CD14-positive monocyte (primary cell): ENCODE measurements at regions of chr7 and their contacts with region 1.

Region 1: GRCh38 chr7:41705109-41705901 is 2.4 kb upstream of the INHBA start:
- DNase-seq: peak; percentile 83 to 90 (median 84)
- H3K4me3 ChIP-seq: peak overlapping the region; percentile 45 to 84 (median 58)
- H3K4me3 Mint-ChIP-seq: peak overlapping the region; percentile 87 to 93
- H3K27ac ChIP-seq: peak overlapping the region; percentile 39 to 75
- H3K27ac Mint-ChIP-seq: peak overlapping the region; percentile 76 to 92 (median 88)
- H3K4me1 ChIP-seq: peaks cover 16 to 33% of the 10 kb centered on the region in 2 donors
- H3K4me1 Mint-ChIP-seq: peaks cover 46% of the 10 kb centered on the region
- H3K27me3 ChIP-seq: peaks cover 0 to 3% of the 10 kb centered on the region in 2 donors
- H3K27me3 Mint-ChIP-seq: peaks cover 6 to 23% (median 15%) of the 10 kb centered on the region in 3 donors
- CTCF ChIP-seq: peak; percentile 85

Region 2: DNA sequence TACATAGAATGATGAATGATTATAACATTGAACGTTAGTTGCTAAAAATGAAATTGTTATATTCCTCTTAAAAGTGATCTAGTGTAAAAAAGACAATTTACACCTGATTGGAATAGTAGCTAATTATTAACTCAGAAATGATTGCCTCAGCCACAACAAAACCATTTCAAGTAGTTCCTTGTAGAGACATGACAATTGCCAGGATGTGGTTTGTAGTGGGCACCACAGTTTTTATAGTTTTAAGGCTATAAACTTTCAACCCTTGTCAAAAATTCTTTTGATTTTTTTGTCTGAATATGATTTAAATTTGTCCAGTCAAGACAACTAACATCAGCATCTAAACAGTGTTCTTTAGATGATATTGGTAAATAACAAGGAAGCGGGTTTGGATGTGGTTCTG is 1425.3 kb before region 1 on chr7:
- intact Hi-C with region 1: loop called in 1 of 2 experiments (anchors 10 kb)
- DNase-seq: no peak
- H3K4me3 ChIP-seq: no peak overlapping the region
- H3K4me3 Mint-ChIP-seq: no peak overlapping the region
- H3K27ac ChIP-seq: no peak overlapping the region
- H3K27ac Mint-ChIP-seq: no peak overlapping the region
- H3K4me1 ChIP-seq: no peaks in the 10 kb centered on the region
- H3K4me1 Mint-ChIP-seq: peaks cover 1% of the 10 kb centered on the region
- H3K27me3 ChIP-seq: no peaks in the 10 kb centered on the region
- H3K27me3 Mint-ChIP-seq: peaks cover 0 to 2% (median 0%) of the 10 kb centered on the region in 3 donors
- CTCF ChIP-seq: no peak

Region 3: DNA sequence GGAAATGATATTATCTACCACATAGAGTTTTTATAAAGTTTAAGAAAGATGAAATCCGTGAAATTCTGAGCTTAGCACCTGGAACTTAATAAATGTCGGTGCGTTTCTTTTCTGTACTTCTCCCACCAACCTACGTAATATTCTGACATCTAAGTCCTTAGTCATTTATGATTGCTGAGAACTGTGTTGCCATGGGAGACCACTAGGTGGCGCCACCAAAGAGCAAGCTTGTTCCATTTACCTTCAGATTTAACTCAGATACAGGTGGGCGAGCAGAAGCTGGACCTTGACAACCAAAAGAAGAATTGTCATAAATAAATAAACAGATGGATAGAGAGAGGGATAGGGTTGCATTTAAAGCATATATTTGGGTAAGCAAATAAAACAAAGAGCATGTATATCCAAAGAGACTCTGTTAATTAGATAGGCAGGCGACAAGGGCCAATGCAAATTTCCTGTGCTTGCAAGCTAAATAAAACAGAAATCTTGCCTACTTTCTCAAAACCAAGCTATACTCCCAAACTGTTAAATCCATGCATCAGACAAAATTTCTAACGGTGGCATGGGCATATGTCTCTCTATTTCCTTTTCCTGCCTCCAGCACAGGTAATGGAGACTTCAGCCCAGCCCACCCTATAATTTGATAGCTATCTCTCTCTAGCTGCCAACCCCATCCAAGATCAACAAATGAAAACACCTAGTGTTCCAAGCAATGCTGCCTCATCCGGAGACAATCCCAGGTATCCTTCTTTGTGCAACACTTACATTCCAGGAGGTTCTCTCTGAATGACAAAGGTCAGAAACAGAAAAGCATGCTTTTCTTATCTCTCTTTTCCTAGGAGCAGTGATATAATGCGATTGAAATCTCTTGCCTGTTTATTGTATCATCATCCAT is 702.0 kb before region 1 on chr7:
- intact Hi-C with region 1: loop called in 1 of 2 experiments (anchors 10 kb)
- DNase-seq: peak; percentile 31 to 55 (median 54)
- H3K4me3 ChIP-seq: no peak overlapping the region
- H3K4me3 Mint-ChIP-seq: no peak overlapping the region
- H3K27ac ChIP-seq: no peak overlapping the region
- H3K27ac Mint-ChIP-seq: no peak overlapping the region
- H3K4me1 ChIP-seq: peaks cover 6 to 11% of the 10 kb centered on the region in 2 donors
- H3K4me1 Mint-ChIP-seq: peaks cover 15% of the 10 kb centered on the region
- H3K27me3 ChIP-seq: no peaks in the 10 kb centered on the region
- H3K27me3 Mint-ChIP-seq: peaks cover 0 to 2% (median 2%) of the 10 kb centered on the region in 3 donors
- CTCF ChIP-seq: peak; percentile 90

Region 4: DNA sequence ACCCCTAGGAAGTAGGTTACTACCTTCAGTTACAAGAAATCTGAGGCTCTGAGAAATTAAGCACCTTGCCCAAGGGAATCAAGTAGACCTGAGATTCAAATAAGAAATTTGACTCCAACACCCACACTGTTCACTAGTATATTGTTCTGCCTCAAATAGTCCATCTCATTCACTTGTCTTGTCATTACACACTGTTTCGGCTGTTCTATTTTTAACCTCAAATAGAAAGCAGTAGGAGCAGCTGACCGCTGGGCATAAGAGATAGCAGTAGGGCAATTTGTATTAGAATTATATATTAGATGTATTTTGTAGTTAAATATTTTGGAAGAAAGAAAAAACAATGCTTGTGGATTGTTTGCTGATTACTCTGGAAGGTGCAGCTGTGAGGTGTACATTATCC is 187.5 kb before region 1 on chr7:
- intact Hi-C with region 1: no loop called
- DNase-seq: no peak
- H3K4me3 ChIP-seq: no peak overlapping the region
- H3K4me3 Mint-ChIP-seq: no peak overlapping the region
- H3K27ac ChIP-seq: no peak overlapping the region
- H3K27ac Mint-ChIP-seq: no peak overlapping the region
- H3K4me1 ChIP-seq: peaks cover 0 to 4% of the 10 kb centered on the region in 2 donors
- H3K4me1 Mint-ChIP-seq: no peaks in the 10 kb centered on the region
- H3K27me3 ChIP-seq: no peaks in the 10 kb centered on the region
- H3K27me3 Mint-ChIP-seq: peaks cover 0 to 5% (median 2%) of the 10 kb centered on the region in 3 donors
- CTCF ChIP-seq: no peak

Region 5: GRCh38 chr7:41630741-41631140 is 74.6 kb before region 1 on chr7:
- intact Hi-C with region 1: no loop called
- DNase-seq: no peak
- H3K4me3 ChIP-seq: no peak overlapping the region
- H3K4me3 Mint-ChIP-seq: no peak overlapping the region
- H3K27ac ChIP-seq: no peak overlapping the region
- H3K27ac Mint-ChIP-seq: no peak overlapping the region
- H3K4me1 ChIP-seq: no peaks in the 10 kb centered on the region
- H3K4me1 Mint-ChIP-seq: no peaks in the 10 kb centered on the region
- H3K27me3 ChIP-seq: no peaks in the 10 kb centered on the region
- H3K27me3 Mint-ChIP-seq: no peaks in the 10 kb centered on the region
- CTCF ChIP-seq: no peak

Region 6: DNA sequence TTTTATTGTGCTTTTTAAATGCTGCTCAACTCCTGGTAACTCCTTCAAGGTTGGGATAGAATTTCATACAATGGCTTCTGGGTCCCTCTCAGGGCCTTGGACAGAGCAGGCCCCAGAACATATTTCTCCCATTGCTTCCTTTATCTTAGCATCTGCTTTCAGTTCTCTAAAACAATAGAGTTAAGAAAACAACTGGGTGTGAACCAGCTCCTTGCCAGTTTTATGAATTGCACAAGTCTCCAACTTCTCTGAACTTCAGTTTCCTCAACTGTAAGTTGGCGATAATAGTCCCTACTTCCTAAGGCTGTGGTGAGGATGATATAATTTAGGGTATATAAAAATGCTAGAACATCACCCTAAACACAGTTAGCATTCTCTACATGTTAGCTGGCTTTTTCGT is 74.6 kb after region 1 on chr7:
- intact Hi-C with region 1: loop called (anchors 5 to 10 kb)
- DNase-seq: peak; percentile 68 to 88 (median 80)
- H3K4me3 ChIP-seq: peak overlapping the region in 1 of 3 experiments; percentile 35
- H3K4me3 Mint-ChIP-seq: peak overlapping the region in 1 of 2 donors; percentile 51
- H3K27ac ChIP-seq: peak overlapping the region; percentile 76 to 88
- H3K27ac Mint-ChIP-seq: peak overlapping the region; percentile 92 to 98 (median 95)
- H3K4me1 ChIP-seq: peaks cover 42 to 45% of the 10 kb centered on the region in 2 donors
- H3K4me1 Mint-ChIP-seq: peaks cover 45% of the 10 kb centered on the region
- H3K27me3 ChIP-seq: no peaks in the 10 kb centered on the region
- H3K27me3 Mint-ChIP-seq: peaks cover 0 to 3% (median 0%) of the 10 kb centered on the region in 3 donors
- CTCF ChIP-seq: no peak